Activated B cell treated with CpG ODN at 0.5 μM for 24 hours (primary cell): ENCODE measurements at regions of chr15 and their contacts with region 1.

Region 1: DNA sequence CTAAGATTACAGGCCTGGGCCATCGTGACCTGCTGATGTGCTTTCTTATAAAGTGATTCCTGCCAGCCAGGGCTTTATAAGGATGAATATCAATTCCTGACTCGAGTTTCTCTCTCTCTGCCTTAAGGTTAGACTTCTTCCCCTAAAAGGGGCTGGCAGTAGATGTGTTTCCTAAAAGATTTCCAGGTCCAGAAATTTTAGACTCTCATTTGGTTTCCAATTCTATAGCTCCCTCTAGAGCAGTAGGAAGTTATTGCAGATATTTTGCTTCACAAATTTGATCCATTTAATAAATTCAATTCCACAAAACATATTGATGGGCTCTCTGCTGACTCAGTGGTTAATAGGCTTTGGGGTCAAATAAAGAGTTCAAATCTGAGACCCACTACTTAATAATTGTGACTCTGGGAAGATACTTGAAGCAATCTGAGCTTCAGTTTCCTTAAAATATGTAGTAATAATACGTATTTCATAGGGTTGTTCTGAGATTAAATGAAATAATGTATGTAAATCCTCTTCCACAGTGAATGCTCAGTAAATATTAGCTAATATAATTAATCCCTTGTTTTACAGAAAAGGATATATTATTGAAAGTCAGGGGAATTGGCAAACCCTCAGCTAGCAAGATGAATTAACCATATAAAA is 2.1 kb downstream of the TRIM69 start:
- DNase-seq: no peak
- ATAC-seq: no peak
- H3K4me3 Mint-ChIP-seq: no peak overlapping the region
- H3K27ac Mint-ChIP-seq: no peak overlapping the region
- H3K4me1 Mint-ChIP-seq: peaks cover 30% of the 10 kb centered on the region
- H3K27me3 Mint-ChIP-seq: no peaks in the 10 kb centered on the region
- CTCF ChIP-seq: peak; percentile 92

Region 2: DNA sequence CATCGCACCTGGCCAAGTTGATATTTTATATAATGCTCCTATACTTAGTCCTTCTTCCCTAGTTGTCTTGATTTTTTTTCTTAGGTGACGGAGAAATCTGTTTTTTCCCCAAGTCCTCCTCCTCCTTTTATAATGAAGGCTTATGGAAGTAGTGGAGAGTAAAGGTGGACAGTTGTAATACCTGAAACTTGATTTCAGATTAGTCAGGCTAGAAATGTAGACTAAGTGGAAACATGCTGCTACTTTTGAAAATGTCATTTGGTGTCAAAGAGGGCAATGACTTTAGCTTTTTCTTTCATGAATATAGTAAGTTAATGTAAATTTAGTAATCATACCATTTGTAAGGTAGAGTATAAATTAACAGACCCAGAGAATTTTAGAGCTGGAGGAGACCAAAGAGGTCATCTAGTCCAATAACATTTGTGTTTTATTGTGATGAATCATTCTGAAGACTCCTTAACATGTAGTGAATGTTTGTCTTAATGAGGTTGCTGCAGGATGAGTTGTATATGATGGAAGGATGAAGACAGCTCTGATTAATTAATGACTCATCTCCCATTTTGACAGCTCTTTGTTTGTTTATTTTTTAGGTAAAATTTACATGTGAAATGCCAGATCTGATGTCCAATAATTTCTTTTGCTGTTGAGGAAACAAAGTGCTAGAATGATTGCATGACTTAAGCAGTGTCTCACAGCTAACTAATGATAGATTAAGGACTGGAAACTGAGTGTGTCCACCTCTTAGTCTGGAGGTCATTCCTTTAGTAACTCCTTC is 302.4 kb before region 1 on chr15:
- CTCF ChIA-PET with region 1: no interaction called
- POLR2A ChIA-PET with region 1: no interaction called
- intact Hi-C with region 1: no loop called
- DNase-seq: no peak
- ATAC-seq: no peak
- H3K4me3 Mint-ChIP-seq: no peak overlapping the region
- H3K27ac Mint-ChIP-seq: no peak overlapping the region
- H3K4me1 Mint-ChIP-seq: peaks cover 44% of the 10 kb centered on the region
- H3K27me3 Mint-ChIP-seq: no peaks in the 10 kb centered on the region
- CTCF ChIP-seq: no peak

Region 3: GRCh38 chr15:44584162-44584749 is 154.2 kb before region 1 on chr15:
- CTCF ChIA-PET with region 1: interaction called, 42 read pairs
- POLR2A ChIA-PET with region 1: interaction called, 8 read pairs
- intact Hi-C with region 1: no loop called
- DNase-seq: peak; percentile 31
- ATAC-seq: peak; percentile 82
- H3K4me3 Mint-ChIP-seq: no peak overlapping the region
- H3K27ac Mint-ChIP-seq: no peak overlapping the region
- H3K4me1 Mint-ChIP-seq: peaks cover 2% of the 10 kb centered on the region
- H3K27me3 Mint-ChIP-seq: no peaks in the 10 kb centered on the region
- CTCF ChIP-seq: no peak

Region 4: DNA sequence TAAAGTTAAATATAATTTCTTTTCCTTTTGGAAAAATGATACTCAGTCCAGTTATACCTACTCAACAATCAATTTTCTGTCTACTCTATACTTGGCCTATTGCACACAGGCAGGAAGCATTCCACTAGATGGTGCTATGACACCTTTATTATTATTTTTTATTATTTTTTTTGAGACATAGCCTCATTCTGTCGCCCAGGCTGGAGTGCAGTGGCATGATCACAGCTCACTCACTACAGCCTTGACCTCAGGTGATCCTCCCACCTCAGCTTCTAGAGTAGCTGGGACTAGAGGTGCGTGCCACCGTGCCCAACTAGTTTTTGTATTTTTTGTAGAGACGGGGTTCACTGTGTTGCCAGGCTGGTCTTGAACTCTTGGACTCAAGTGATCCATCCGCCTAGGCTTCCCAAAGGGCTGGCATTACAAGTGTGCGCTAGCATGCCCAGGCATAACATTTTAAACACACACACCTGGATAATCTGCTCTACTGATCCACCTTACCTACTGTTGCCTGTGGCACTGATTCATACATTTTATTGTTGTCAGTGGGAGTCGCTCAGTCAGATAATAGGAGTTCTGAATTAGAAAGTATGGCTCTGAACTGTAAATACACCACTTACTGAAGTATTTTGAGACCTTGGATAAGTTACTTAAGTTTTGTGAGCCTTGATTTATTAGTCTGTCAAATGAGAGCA is 145.3 kb before region 1 on chr15:
- CTCF ChIA-PET with region 1: interaction called, 24 read pairs
- POLR2A ChIA-PET with region 1: no interaction called
- intact Hi-C with region 1: loop called (anchors 1 kb)
- DNase-seq: no peak
- ATAC-seq: peak; percentile 62
- H3K4me3 Mint-ChIP-seq: no peak overlapping the region
- H3K27ac Mint-ChIP-seq: peak overlapping the region; percentile 63
- H3K4me1 Mint-ChIP-seq: peaks cover 11% of the 10 kb centered on the region
- H3K27me3 Mint-ChIP-seq: no peaks in the 10 kb centered on the region
- CTCF ChIP-seq: no peak

Region 5: GRCh38 chr15:44670491-44670890 is 68.0 kb before region 1 on chr15:
- CTCF ChIA-PET with region 1: interaction called, 202 read pairs
- POLR2A ChIA-PET with region 1: interaction called, 798 read pairs
- intact Hi-C with region 1: no loop called
- DNase-seq: no peak
- ATAC-seq: peak; percentile 14
- H3K4me3 Mint-ChIP-seq: peak overlapping the region; percentile 42
- H3K27ac Mint-ChIP-seq: peak overlapping the region; percentile 95
- H3K4me1 Mint-ChIP-seq: peaks cover 88% of the 10 kb centered on the region
- H3K27me3 Mint-ChIP-seq: no peaks in the 10 kb centered on the region
- CTCF ChIP-seq: no peak

Region 6: DNA sequence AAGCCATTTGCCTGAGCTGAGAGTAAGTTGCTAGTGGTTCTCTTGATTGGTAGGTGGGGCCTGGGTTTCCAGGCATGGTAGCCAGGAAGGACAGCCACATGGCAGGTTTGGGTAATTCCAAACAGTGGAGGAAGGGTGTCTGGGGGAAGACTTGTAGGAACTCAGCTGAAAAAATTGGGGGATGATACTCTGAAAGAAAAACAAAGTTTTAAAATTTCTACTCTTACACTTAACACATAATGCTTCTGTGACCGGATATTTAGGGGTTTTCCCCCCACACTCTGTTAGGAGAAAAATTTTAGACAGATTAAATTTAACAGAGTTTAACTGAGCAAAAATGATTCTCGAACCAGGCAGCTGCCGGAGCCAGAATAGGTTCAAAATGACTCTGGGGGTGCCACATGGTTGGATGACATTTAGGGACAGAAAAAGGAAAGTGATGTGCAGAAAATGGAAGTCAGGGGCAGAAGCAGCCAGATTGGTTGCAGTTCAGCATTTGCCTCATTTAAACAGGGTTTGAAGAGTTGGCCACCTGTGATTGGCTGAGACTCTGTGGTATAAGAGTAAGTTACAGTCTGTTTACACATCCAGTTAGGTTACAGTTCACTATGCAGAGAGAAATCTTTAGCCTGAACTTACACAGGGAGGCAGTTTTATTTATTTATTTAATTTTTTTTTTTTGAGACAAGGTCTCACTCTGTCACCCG is 19.0 kb before region 1 on chr15:
- CTCF ChIA-PET with region 1: interaction called, 164 read pairs
- POLR2A ChIA-PET with region 1: interaction called, 2,387 read pairs
- intact Hi-C with region 1: no loop called
- DNase-seq: no peak
- ATAC-seq: peak; percentile 64
- H3K4me3 Mint-ChIP-seq: peak overlapping the region; percentile 72
- H3K27ac Mint-ChIP-seq: peak overlapping the region; percentile 98
- H3K4me1 Mint-ChIP-seq: peaks cover 93% of the 10 kb centered on the region
- H3K27me3 Mint-ChIP-seq: no peaks in the 10 kb centered on the region
- CTCF ChIP-seq: no peak

Region 7: DNA sequence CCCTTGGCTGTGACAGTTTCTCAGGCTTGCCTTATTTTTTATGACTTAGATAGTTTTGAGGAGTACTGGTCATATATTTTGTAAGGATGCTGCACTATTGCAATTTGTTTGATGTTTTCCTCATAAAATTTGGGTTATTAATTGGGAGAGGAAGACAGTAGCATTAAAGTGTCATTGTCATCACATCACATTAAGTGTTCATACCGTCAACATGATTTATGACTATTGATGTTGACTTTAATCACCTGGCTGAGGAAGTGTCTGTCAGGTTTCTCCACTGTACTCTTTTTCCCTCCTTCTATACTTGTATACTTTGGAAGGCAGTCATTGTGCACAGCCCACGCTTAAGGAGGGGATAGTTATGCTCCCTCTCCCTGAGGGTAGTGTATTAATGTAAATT is 24.7 kb after region 1 on chr15:
- CTCF ChIA-PET with region 1: no interaction called
- POLR2A ChIA-PET with region 1: no interaction called
- intact Hi-C with region 1: no loop called
- DNase-seq: no peak
- ATAC-seq: no peak
- H3K4me3 Mint-ChIP-seq: no peak overlapping the region
- H3K27ac Mint-ChIP-seq: no peak overlapping the region
- H3K4me1 Mint-ChIP-seq: no peaks in the 10 kb centered on the region
- H3K27me3 Mint-ChIP-seq: no peaks in the 10 kb centered on the region
- CTCF ChIP-seq: no peak

Region 8: DNA sequence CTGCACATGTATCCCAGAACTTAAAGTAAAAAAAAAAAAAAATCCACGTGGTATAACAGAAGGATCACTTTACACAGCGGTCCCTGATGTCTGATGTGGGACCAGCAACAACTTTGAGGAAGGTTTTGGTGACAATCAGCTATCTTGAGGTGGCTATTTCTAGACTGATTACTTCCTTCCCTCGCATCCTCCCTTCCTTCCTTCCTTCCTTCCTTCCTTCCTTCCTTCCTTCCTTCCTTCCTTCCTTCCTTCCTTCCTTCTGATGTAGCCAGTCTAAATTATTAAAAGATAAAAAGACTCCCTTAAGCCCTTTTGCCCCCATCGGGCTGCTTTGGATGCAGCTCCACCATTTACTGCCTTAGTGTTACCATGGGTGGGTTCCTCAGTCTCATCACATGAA is 299.5 kb after region 1 on chr15:
- CTCF ChIA-PET with region 1: no interaction called
- POLR2A ChIA-PET with region 1: no interaction called
- intact Hi-C with region 1: loop called (anchors 1 kb)
- DNase-seq: no peak
- ATAC-seq: no peak
- H3K4me3 Mint-ChIP-seq: no peak overlapping the region
- H3K27ac Mint-ChIP-seq: peak overlapping the region; percentile 31
- H3K4me1 Mint-ChIP-seq: peaks cover 35% of the 10 kb centered on the region
- H3K27me3 Mint-ChIP-seq: no peaks in the 10 kb centered on the region
- CTCF ChIP-seq: no peak